ENCODE measurements at regions of chr6 and their contacts with region 1.

Region 1: GRCh38 chr6:2738373-2738979 is 12.2 kb downstream of the MYLK4 start:
- DNase-seq: peak; percentile 55
- H3K4me3 ChIP-seq: peak overlapping the region in 1 of 2 experiments; percentile 9; a peak in 1 of 4 replicates
- H3K27ac ChIP-seq: no peak overlapping the region
- H3K4me1 ChIP-seq: no peaks in the 10 kb centered on the region
- H3K27me3 ChIP-seq: no peaks in the 10 kb centered on the region
- CTCF ChIP-seq: peak; percentile 85
- EP300 ChIP-seq: no peak
- RAD21 ChIP-seq: peak; percentile 94

Region 2: GRCh38 chr6:2725999-2726567 is 12.4 kb before region 1 on chr6:
- CTCF ChIA-PET with region 1: interaction called, 14 read pairs
- POLR2A ChIA-PET with region 1: no interaction called
- DNase-seq: peak; percentile 25
- H3K4me3 ChIP-seq: no peak overlapping the region
- H3K27ac ChIP-seq: peak overlapping the region; percentile 8 to 58; a peak in 3 of 4 replicates
- H3K4me1 ChIP-seq: peaks cover 0 to 4% of the 10 kb centered on the region in 2 experiments; a peak in 1 of 4 replicates
- H3K27me3 ChIP-seq: no peaks in the 10 kb centered on the region
- CTCF ChIP-seq: no peak
- EP300 ChIP-seq: no peak
- RAD21 ChIP-seq: no peak

Region 3: GRCh38 chr6:2749969-2750600 is 11.6 kb after region 1 on chr6:
- CTCF ChIA-PET with region 1: interaction called, 176 read pairs
- POLR2A ChIA-PET with region 1: no interaction called
- DNase-seq: peak; percentile 55
- H3K4me3 ChIP-seq: peak overlapping the region in 1 of 2 experiments; percentile 18; a peak in 1 of 4 replicates
- H3K27ac ChIP-seq: no peak overlapping the region
- H3K4me1 ChIP-seq: peaks cover 0 to 11% of the 10 kb centered on the region in 2 experiments; a peak in 3 of 4 replicates
- H3K27me3 ChIP-seq: no peaks in the 10 kb centered on the region
- CTCF ChIP-seq: peak; percentile 91
- EP300 ChIP-seq: no peak
- RAD21 ChIP-seq: peak; percentile 62

Measured in SK-N-SH (cell line).